Activated CD4-positive, alpha-beta T cell treated with anti-CD3 and anti-CD28 coated beads, Interleukin-2, amount 10 ng/mL, durations not matched to agents 24 days and 14 days (primary cell): ENCODE measurements at regions of chr7 and their contacts with region 1.

Region 1: GRCh38 chr7:38369816-38370493 is 96.5 kb upstream of the TARP start:
- DNase-seq: peak; percentile 93
- H3K4me3 Mint-ChIP-seq: peak overlapping the region; percentile 22
- H3K27ac Mint-ChIP-seq: peak overlapping the region; percentile 40
- H3K4me1 Mint-ChIP-seq: peaks cover 32% of the 10 kb centered on the region
- H3K27me3 Mint-ChIP-seq: no peaks in the 10 kb centered on the region

Region 2: GRCh38 chr7:37052705-37053104 is 1317.2 kb before region 1 on chr7:
- intact Hi-C with region 1: no loop called
- DNase-seq: peak; percentile 77
- H3K4me3 Mint-ChIP-seq: no peak overlapping the region
- H3K27ac Mint-ChIP-seq: no peak overlapping the region
- H3K4me1 Mint-ChIP-seq: peaks cover 2% of the 10 kb centered on the region
- H3K27me3 Mint-ChIP-seq: no peaks in the 10 kb centered on the region

Region 3: GRCh38 chr7:37901236-37901827 is 468.6 kb before region 1 on chr7:
- intact Hi-C with region 1: loop called (anchors 5 kb)
- DNase-seq: no peak
- H3K4me3 Mint-ChIP-seq: no peak overlapping the region
- H3K27ac Mint-ChIP-seq: peak overlapping the region; percentile 52
- H3K4me1 Mint-ChIP-seq: no peaks in the 10 kb centered on the region
- H3K27me3 Mint-ChIP-seq: peaks cover 10% of the 10 kb centered on the region

Region 4: DNA sequence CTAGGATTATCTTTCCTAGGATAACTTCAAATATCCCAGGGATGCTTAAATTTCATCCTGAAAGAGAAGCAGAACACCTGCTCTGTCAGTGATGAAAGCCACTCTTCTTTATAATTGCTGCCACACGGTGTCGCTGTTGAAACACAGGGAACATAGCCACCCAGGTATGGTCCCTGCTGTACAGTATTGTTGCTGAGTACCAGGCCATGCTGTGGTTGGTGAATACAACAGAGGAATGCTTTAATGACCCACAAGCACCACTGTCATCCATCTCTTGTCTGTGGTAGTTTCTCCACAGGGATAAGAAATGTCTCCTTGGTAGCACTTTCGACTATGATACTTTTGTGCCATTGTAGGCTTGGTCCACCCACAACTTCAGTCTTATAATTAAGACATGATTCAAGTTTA is 262.5 kb before region 1 on chr7:
- intact Hi-C with region 1: loop called (anchors 1 kb)
- DNase-seq: peak; percentile 90
- H3K4me3 Mint-ChIP-seq: no peak overlapping the region
- H3K27ac Mint-ChIP-seq: no peak overlapping the region
- H3K4me1 Mint-ChIP-seq: no peaks in the 10 kb centered on the region
- H3K27me3 Mint-ChIP-seq: peaks cover 40% of the 10 kb centered on the region

Region 5: GRCh38 chr7:38215735-38216670 is 154.0 kb before region 1 on chr7:
- intact Hi-C with region 1: loop called (anchors 1 kb)
- DNase-seq: peak; percentile 92
- H3K4me3 Mint-ChIP-seq: no peak overlapping the region
- H3K27ac Mint-ChIP-seq: no peak overlapping the region
- H3K4me1 Mint-ChIP-seq: peaks cover 38% of the 10 kb centered on the region
- H3K27me3 Mint-ChIP-seq: no peaks in the 10 kb centered on the region

Region 6: GRCh38 chr7:38222481-38223096 is 147.4 kb before region 1 on chr7:
- intact Hi-C with region 1: loop called (anchors 1 kb)
- DNase-seq: peak; percentile 86
- H3K4me3 Mint-ChIP-seq: no peak overlapping the region
- H3K27ac Mint-ChIP-seq: no peak overlapping the region
- H3K4me1 Mint-ChIP-seq: peaks cover 27% of the 10 kb centered on the region
- H3K27me3 Mint-ChIP-seq: no peaks in the 10 kb centered on the region

Region 7: GRCh38 chr7:38463277-38464225 is 93.6 kb after region 1 on chr7:
- intact Hi-C with region 1: no loop called
- DNase-seq: peak; percentile 92
- H3K4me3 Mint-ChIP-seq: peak overlapping the region; percentile 65
- H3K27ac Mint-ChIP-seq: peak overlapping the region; percentile 70
- H3K4me1 Mint-ChIP-seq: peaks cover 18% of the 10 kb centered on the region
- H3K27me3 Mint-ChIP-seq: peaks cover 8% of the 10 kb centered on the region